GM12878 (cell line): ENCODE measurements at regions of chr12 and their contacts with region 1.

Region 1: DNA sequence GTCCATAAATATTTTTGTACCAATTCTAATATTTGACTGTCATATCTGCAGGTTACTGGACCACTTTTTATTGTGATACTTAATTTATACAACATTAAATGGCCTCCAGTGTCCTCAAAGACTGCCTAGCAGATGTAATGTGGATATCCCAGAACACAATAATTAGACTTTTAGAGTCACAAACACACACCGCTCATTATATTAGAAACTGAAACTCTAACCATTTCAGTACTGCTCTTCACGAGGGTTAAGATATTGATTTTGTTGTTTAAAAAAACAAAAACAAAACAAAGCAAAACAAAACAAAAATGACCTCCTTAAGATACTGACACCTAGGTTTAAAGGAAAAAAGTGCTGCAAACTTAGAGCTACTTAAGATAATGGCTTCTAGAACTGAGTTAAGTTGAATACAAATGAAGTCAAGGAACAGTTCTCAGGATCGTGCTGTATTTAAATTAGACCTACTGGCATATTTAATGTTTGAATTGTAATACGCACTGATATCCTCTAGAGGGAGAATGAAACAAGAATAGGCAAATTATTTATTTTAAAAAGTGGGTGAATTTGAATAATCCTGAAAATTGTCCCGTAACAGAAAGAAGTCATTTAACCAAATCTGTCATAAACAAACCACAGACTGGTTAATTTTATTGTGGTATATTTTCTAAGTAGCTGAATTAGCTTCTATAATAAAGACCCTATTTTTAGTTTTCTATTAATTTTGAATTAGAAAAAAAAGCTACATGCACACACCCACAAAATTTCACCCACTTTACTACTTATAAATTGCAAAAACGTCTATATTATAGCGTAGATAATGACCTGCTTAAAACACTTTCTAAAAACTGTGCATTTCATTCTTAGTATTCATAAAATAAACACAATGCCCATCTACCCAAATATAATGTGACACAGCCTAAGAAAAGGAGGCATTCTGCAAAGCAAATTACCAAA is 395.2 kb upstream of the DCN start:
- DNase-seq: no peak
- ATAC-seq: peak; percentile 73
- H3K4me3 ChIP-seq: no peak overlapping the region; the same call in 1 of the 2 replicates
- H3K27ac ChIP-seq: no peak overlapping the region
- H3K4me1 ChIP-seq: no peaks in the 10 kb centered on the region
- H3K27me3 ChIP-seq: no peaks in the 10 kb centered on the region
- CTCF ChIP-seq: peak; percentile 36 to 51 (median 41); a peak in 3 of 6 replicates
- EP300 ChIP-seq: no peak
- POLR2A ChIP-seq: no peak
- RAD21 ChIP-seq: peak; percentile 47; the same call in 1 of the 2 replicates

Region 2: DNA sequence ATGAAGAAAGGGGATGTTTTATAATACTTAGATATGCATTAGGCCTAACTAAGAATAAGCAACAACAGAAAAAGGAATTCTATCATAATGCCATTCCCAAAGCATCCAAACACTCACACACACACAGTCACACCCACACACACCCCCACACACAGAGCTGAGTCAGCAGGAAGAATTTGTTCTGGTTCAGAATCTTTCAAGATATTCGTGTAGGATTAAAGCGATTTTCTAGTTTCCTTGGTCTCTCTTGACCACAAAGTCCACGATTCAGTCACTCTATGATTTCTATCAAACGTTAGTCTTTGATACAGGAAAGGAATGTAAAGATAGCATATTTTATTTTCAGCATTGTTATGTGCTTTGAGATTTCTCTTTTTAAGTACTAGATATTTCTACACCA is 12.6 kb before region 1 on chr12:
- CTCF ChIA-PET with region 1: interaction called, 8 read pairs
- POLR2A ChIA-PET with region 1: no interaction called
- RAD21 ChIA-PET with region 1: interaction called, 3 read pairs
- SMC1A ChIA-PET with region 1: interaction called, 13 read pairs
- in situ Hi-C with region 1: no loop called
- intact Hi-C with region 1: no loop called
- DNase-seq: no peak
- ATAC-seq: no peak
- H3K4me3 ChIP-seq: no peak overlapping the region
- H3K27ac ChIP-seq: no peak overlapping the region
- H3K4me1 ChIP-seq: no peaks in the 10 kb centered on the region
- H3K27me3 ChIP-seq: no peaks in the 10 kb centered on the region
- CTCF ChIP-seq: no peak
- EP300 ChIP-seq: no peak
- POLR2A ChIP-seq: no peak
- RAD21 ChIP-seq: no peak

Region 3: DNA sequence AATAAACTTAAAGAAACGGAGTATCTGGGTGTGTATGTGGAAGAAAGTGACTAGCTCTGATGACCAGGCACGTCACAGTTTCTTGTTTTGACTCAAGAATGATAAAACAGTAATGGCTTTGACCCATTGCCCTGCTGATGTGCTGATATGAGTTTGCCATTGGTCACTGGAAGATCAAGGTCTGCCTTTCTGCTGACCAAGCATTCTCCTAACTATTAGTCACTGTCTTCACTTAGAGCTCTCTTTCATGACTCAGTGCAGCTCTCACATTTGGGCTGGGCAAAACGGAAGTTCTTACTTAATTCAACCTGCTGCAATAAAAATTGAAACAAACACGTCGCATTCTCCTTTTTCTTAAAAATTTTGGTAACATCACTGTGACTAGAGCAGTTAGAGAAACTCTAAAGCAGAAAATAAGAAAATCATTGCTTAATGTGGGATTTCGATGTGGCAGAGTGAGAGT is 201.1 kb after region 1 on chr12:
- CTCF ChIA-PET with region 1: interaction called, 3 read pairs
- POLR2A ChIA-PET with region 1: no interaction called
- RAD21 ChIA-PET with region 1: interaction called, 6 read pairs
- SMC1A ChIA-PET with region 1: interaction called, 5 read pairs
- in situ Hi-C with region 1: no loop called
- intact Hi-C with region 1: loop called (anchors 5 kb)
- DNase-seq: peak; percentile 93
- ATAC-seq: peak; percentile 99
- H3K4me3 ChIP-seq: peak overlapping the region; percentile 34; the same call in 1 of the 2 replicates
- H3K27ac ChIP-seq: peak overlapping the region; percentile 65
- H3K4me1 ChIP-seq: peaks cover 7% of the 10 kb centered on the region
- H3K27me3 ChIP-seq: no peaks in the 10 kb centered on the region
- CTCF ChIP-seq: no peak
- EP300 ChIP-seq: peak; percentile 29 to 80; a peak in 1 of 4 replicates
- POLR2A ChIP-seq: no peak
- RAD21 ChIP-seq: no peak